Pancreas (tissue), 10 donors: ENCODE measurements at regions of chr12 and their contacts with region 1.

Region 1: DNA sequence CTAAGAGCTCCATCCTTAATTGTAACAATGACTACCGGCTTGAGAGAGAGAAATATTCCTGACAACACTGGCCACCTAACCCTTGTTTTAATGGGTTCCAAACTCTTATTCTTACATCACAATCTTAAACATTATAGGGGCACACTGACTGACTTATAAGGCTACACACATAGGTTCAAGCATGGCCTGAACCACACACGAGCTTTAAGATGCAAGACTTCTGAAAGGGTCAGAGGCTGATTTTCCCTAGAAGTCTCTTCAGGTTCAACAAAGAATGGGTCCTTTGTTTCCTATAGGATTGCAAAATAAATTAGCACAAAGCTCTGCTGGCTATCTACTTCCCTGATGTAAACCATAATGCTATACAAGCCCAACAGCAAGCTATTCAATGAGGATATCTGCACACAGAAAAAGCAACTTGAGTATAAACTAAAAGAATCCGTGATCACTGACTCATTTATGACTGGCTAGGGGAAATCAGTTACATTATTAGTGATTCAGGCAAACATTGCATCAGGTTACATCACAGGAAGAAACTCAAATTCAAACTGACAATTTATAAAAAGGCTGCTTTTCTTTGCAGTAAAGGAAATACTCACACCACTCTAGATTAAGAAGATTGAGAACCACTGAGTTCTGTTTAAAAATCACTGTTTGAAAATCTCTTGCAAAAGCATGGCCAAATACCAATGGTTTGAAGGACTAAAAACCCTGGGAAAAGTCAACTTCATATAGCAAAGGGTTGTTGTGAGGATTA is 8.5 kb downstream of the BTG1 start:
- DNase-seq: no peak
- ATAC-seq: peak; percentile 6 to 39 (median 14)
- H3K4me3 ChIP-seq: peak overlapping the region in 2 of 4 donors; percentile 88 to 100
- H3K27ac ChIP-seq: peak overlapping the region in 3 of 4 donors; percentile 6 to 100 (median 100)
- H3K4me1 ChIP-seq: peaks cover 25 to 65% (median 61%) of the 10 kb centered on the region in 3 donors
- H3K27me3 ChIP-seq: no peaks in the 10 kb centered on the region
- CTCF ChIP-seq: no peak

Region 2: DNA sequence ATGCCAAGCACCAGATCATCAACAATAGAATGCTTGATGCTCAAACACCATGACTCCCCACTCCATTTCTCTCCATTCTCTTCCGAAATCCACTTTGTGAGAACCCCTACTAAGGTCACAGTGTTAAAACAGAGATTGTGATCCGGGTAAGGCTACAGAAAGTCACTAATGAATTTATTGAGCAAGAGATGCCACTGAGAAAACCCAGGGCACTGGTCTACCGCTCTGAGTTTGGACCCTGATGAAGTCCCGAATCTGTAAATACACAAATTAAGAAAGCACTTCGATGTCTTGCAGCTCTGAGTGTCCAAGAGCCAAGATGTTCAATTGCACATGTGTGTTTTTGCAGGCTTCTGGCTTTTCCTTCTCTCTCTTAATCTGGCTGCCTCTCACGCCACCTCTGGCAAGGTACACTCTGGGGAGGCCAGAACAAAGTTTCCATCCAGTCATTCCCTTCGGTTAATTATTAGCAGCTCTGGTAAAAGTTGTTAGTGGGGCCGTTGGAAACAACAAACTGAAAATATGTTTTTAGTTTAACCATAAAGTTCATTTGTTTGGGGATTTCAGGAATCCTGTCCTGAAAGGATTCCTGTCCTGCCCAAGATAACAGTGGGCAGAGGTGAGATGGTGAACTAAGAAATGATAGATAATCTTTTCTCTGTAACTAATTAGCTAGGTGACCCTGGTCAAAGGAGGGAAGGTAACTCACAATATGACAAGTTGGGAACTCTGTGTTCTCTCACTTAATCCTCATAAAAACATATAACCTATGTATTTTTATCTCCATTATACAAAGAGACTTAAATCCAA is 66.9 kb before region 1 on chr12:
- intact Hi-C with region 1: loop called in 1 of 3 experiments (anchors 5 kb)
- DNase-seq: peak in 4 of 6 donors; percentile 68 to 85 (median 80)
- ATAC-seq: peak; percentile 85 to 93 (median 90)
- H3K4me3 ChIP-seq: peak overlapping the region in 2 of 4 donors; percentile 11 to 15
- H3K27ac ChIP-seq: peak overlapping the region; percentile 79 to 94 (median 92)
- H3K4me1 ChIP-seq: peaks cover 28 to 43% (median 43%) of the 10 kb centered on the region in 3 donors
- H3K27me3 ChIP-seq: no peaks in the 10 kb centered on the region
- CTCF ChIP-seq: no peak

Region 3: DNA sequence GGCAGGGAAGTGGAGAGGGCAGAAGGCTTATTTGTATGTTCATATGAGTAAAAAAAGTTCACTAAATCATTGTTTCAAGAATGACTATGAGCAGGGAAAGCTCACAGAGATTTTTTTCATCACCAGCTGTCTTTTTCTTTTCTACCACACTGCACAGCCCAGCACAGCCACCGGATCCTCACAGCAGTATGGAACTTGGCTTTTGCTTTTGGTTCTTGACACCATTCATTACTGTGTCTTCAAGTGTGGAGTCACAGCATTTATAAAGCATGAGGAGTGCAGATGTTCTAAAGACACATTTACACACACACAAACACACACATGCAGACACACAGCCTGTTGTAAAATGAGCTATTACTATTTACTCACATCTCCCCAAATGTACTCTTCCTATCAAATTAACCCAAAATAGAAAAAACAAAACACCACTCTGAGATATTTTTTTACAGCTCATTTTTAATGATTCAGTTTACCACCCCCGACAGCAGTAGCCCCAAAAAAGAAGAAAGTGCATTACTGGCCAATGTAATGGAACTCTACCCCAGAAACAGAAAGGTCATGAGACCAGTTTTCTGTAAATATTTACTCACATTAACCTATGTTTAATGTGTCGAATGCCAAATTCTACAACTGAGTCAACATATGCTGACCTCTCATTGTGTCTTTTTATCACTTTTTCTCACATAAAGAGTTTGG is 52.0 kb before region 1 on chr12:
- intact Hi-C with region 1: loop called in 1 of 3 experiments (anchors 10 kb)
- DNase-seq: no peak
- ATAC-seq: peak; percentile 28 to 70 (median 38)
- H3K4me3 ChIP-seq: no peak overlapping the region
- H3K27ac ChIP-seq: no peak overlapping the region
- H3K4me1 ChIP-seq: peaks cover 8 to 12% (median 10%) of the 10 kb centered on the region in 3 donors
- H3K27me3 ChIP-seq: no peaks in the 10 kb centered on the region
- CTCF ChIP-seq: no peak